ENCODE measurements at regions of chr18 and their contacts with region 1.

Region 1: GRCh38 chr18:35143622-35144596 is 96.9 kb upstream of the ZNF397 start:
- DNase-seq: no peak
- H3K4me3 ChIP-seq: no peak overlapping the region
- H3K27ac ChIP-seq: no peak overlapping the region
- H3K4me1 ChIP-seq: peaks cover 0 to 38% (median 4%) of the 10 kb centered on the region in 6 donors
- H3K27me3 ChIP-seq: no peaks in the 10 kb centered on the region
- CTCF ChIP-seq: peak; percentile 12 to 66 (median 54)
- POLR2A ChIP-seq: no peak

Region 2: DNA sequence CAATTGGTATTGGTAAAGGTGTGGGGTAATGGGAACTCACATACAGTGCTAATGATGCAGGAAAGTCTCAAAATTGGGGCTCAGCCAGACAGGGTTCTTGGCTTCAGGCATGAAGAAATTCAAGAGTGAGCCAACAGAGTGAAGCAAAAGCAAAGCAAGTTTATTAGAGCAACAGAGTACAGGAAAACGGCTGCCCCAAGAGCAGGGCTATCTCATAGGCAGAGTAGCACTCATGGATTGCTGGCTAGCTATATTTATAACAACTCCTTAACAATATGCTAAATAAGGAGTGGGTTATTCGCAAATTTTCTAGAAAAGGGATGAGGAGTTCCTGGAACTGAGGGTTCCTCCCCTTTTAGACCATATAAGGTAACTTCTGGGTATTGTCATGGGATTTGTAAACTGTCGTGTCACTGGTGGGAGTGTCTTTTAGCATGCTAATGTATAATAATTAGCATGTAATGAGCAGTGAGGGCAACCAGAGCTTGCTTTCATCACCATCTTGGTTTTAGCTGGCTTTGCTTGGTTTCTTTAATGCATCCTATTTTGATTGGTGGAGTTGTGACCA is 685.4 kb before region 1 on chr18:
- intact Hi-C with region 1: no loop called
- DNase-seq: no peak
- H3K4me3 ChIP-seq: no peak overlapping the region
- H3K27ac ChIP-seq: no peak overlapping the region
- H3K4me1 ChIP-seq: no peaks in the 10 kb centered on the region
- H3K27me3 ChIP-seq: no peaks in the 10 kb centered on the region
- CTCF ChIP-seq: no peak
- POLR2A ChIP-seq: no peak

Region 3: GRCh38 chr18:35005963-35006577 is 137.8 kb before region 1 on chr18:
- intact Hi-C with region 1: loop called (anchors 5 kb)
- DNase-seq: no peak
- H3K4me3 ChIP-seq: no peak overlapping the region
- H3K27ac ChIP-seq: no peak overlapping the region
- H3K4me1 ChIP-seq: peaks cover 0 to 8% (median 0%) of the 10 kb centered on the region in 6 donors
- H3K27me3 ChIP-seq: no peaks in the 10 kb centered on the region
- CTCF ChIP-seq: peak; percentile 40 to 72 (median 63)
- POLR2A ChIP-seq: no peak

Region 4: GRCh38 chr18:35972197-35973052 is 828.5 kb after region 1 on chr18 and contains the start of gene RMP24:
- intact Hi-C with region 1: no loop called
- DNase-seq: peak; percentile 98
- H3K4me3 ChIP-seq: peak within 1 kb of the TSS; percentile 75 to 91 (median 82)
- H3K27ac ChIP-seq: peak within 1 kb of the TSS; percentile 81 to 98 (median 92)
- H3K4me1 ChIP-seq: peaks cover 15 to 67% (median 46%) of the 10 kb centered on the region in 6 donors
- H3K27me3 ChIP-seq: no peaks in the 10 kb centered on the region
- CTCF ChIP-seq: peak in 5 of 11 experiments; percentile 8 to 42 (median 23)
- POLR2A ChIP-seq: peak in 1 of 3 donors; percentile 46